IMR-90 (cell line): ENCODE measurements at regions of chr6 and their contacts with region 1.

Region 1: DNA sequence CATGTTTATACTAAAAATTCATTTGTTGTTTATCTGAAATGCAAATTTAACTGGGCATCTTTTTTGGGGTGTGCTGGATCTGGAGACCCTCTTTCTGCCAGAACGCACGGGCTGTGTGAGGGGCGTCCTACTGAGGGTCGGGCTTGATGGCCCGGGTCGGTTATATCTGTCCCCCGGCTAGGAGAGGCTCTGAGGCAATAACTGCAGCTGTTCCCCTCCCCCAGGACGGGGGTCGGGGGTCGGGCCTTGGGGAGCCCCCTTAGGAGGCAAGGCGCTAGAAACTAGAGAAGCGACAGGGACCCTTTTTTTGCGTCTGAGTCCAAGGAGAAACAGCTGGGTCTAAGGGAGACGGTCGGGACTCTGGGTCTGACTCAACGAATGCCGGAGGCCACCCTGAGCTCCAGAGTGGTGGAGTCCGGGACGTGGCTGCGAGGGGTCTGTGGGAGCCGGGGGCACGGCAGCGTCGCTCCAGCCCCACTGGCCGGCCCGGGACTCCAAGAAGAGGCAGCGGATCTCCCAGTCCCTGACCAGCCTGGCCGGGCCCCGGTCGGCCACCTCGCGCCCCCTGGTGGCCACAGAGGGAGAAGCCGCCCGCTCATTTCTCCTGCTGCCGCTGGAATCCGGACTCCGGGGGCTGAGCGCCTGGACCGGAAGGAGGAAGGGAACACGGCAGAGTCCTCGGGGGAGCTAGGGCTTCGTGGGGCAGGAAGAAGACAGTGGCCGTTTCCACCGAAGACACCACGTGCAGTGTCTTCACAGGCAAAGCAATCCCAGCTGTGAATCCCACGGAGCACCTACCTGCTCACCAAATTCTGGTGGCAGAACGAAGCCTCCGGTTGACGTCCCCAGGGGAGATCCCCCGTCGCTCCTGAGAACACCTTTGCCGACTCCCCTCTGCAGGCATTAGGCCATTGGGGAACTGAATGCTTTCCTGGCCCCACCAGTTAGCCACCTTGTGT is 24.0 kb upstream of the SCML4 start:
- DNase-seq: peak; percentile 63
- ATAC-seq: peak; percentile 100
- H3K4me3 ChIP-seq: peak overlapping the region; percentile 47
- H3K27ac ChIP-seq: no peak overlapping the region
- H3K4me1 ChIP-seq: no peaks in the 10 kb centered on the region
- H3K27me3 ChIP-seq: peaks cover 7% of the 10 kb centered on the region
- CTCF ChIP-seq: peak; percentile 93
- POLR2A ChIP-seq: no peak
- RAD21 ChIP-seq: peak; percentile 79

Region 2: GRCh38 chr6:107185391-107185970 is 662.6 kb before region 1 on chr6:
- CTCF ChIA-PET with region 1: no interaction called
- POLR2A ChIA-PET with region 1: no interaction called
- dilution Hi-C with region 1: no loop called
- in situ Hi-C with region 1: loop called (anchors 25 kb)
- intact Hi-C with region 1: no loop called
- DNase-seq: peak; percentile 11
- ATAC-seq: peak; percentile 70; the same call in 1 of the 2 replicates
- H3K4me3 ChIP-seq: no peak overlapping the region
- H3K27ac ChIP-seq: no peak overlapping the region
- H3K4me1 ChIP-seq: no peaks in the 10 kb centered on the region
- H3K27me3 ChIP-seq: no peaks in the 10 kb centered on the region
- CTCF ChIP-seq: no peak
- POLR2A ChIP-seq: no peak
- RAD21 ChIP-seq: peak; percentile 41; the same call in 1 of the 2 replicates

Region 3: GRCh38 chr6:107460083-107460631 is 388.0 kb before region 1 on chr6:
- CTCF ChIA-PET with region 1: no interaction called
- POLR2A ChIA-PET with region 1: no interaction called
- dilution Hi-C with region 1: no loop called
- in situ Hi-C with region 1: no loop called
- intact Hi-C with region 1: no loop called
- DNase-seq: peak; percentile 4
- ATAC-seq: no peak
- H3K4me3 ChIP-seq: peak overlapping the region; percentile 85
- H3K27ac ChIP-seq: peak overlapping the region; percentile 61
- H3K4me1 ChIP-seq: 0 out of 2 replicates have a peak, but pooled peaks cover 2% of the 10 kb centered on the region
- H3K27me3 ChIP-seq: no peaks in the 10 kb centered on the region
- CTCF ChIP-seq: no peak
- POLR2A ChIP-seq: no peak
- RAD21 ChIP-seq: no peak

Region 4: GRCh38 chr6:107704347-107705013 is 143.6 kb before region 1 on chr6:
- CTCF ChIA-PET with region 1: interaction called, 4 read pairs
- POLR2A ChIA-PET with region 1: no interaction called
- dilution Hi-C with region 1: no loop called
- in situ Hi-C with region 1: no loop called
- intact Hi-C with region 1: loop called (anchors 2 kb)
- DNase-seq: peak; percentile 68
- ATAC-seq: peak; percentile 89
- H3K4me3 ChIP-seq: no peak overlapping the region
- H3K27ac ChIP-seq: no peak overlapping the region
- H3K4me1 ChIP-seq: no peaks in the 10 kb centered on the region
- H3K27me3 ChIP-seq: 0 out of 2 replicates have a peak, but pooled peaks cover 4% of the 10 kb centered on the region
- CTCF ChIP-seq: peak; percentile 82
- POLR2A ChIP-seq: no peak
- RAD21 ChIP-seq: peak; percentile 78